ENCODE measurements at regions of chr6 and their contacts with region 1.

Region 1: DNA sequence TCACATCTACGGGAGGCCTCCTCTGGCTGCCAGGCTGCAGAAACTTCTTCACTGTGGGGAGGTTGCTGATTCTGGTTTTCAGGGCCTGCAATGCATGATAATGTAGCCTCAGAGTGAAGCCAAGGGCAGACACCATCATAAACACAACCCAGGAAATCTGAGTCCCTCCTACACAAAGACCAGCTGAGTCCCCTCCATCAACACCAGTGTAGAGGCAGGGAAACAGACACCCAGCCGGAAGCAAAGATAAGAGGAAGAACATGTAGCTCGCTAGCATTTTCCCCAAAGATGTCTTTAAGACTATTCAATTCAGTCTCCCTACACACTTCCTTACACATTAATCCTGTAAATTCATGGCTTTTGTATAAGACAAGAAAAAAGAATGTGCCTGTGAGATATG is 23.6 kb downstream of the GSTA2 start:
- DNase-seq: no peak
- H3K4me3 ChIP-seq: no peak overlapping the region
- H3K27ac ChIP-seq: no peak overlapping the region
- H3K4me1 ChIP-seq: no peaks in the 10 kb centered on the region
- H3K27me3 ChIP-seq: peaks cover 7% of the 10 kb centered on the region; the same call in 1 of the 2 replicates
- CTCF ChIP-seq: no peak
- EP300 ChIP-seq: no peak
- RAD21 ChIP-seq: no peak

Region 2: DNA sequence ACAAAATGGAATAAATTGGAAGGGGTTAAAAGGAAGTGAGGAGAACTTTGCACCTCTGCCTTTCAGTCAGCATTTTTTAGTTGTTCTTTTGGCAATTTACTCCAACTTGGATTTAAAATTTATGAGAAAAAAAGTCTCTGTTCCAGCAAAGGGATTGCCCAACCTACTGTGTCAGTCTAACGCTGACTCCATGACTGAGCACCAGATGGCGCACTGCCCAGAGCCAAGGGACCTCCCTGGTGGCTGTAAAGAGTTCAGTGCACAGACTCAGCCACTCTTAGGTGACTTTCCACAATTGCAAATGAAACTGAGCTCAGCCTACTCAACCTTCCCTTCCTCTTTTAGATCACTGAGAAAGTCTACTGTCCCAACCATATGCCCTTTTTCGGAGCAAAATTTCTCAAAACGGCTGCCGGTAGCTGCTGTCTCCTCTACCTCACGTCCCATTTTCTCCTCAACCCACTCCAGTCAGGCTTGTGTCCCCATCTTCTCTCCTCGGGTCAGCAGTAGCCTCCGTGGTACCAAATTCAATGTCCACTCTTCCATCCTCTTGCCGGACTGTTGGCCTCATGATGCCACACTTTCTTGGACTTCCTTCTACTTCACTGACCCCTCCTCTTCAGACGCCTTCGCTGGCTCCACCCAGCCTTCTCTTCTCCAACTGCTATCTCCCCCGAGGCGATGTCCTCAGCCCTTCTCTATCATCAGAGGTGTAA is 15.1 kb before region 1 on chr6:
- CTCF ChIA-PET with region 1: interaction called, 14 read pairs
- POLR2A ChIA-PET with region 1: no interaction called
- DNase-seq: peak; percentile 61
- H3K4me3 ChIP-seq: no peak overlapping the region; a peak in 1 of 4 replicates
- H3K27ac ChIP-seq: no peak overlapping the region
- H3K4me1 ChIP-seq: no peaks in the 10 kb centered on the region
- H3K27me3 ChIP-seq: no peaks in the 10 kb centered on the region
- CTCF ChIP-seq: peak; percentile 70
- EP300 ChIP-seq: no peak
- RAD21 ChIP-seq: peak; percentile 59